ENCODE measurements at regions of chr11 and their contacts with region 1.

Region 1: DNA sequence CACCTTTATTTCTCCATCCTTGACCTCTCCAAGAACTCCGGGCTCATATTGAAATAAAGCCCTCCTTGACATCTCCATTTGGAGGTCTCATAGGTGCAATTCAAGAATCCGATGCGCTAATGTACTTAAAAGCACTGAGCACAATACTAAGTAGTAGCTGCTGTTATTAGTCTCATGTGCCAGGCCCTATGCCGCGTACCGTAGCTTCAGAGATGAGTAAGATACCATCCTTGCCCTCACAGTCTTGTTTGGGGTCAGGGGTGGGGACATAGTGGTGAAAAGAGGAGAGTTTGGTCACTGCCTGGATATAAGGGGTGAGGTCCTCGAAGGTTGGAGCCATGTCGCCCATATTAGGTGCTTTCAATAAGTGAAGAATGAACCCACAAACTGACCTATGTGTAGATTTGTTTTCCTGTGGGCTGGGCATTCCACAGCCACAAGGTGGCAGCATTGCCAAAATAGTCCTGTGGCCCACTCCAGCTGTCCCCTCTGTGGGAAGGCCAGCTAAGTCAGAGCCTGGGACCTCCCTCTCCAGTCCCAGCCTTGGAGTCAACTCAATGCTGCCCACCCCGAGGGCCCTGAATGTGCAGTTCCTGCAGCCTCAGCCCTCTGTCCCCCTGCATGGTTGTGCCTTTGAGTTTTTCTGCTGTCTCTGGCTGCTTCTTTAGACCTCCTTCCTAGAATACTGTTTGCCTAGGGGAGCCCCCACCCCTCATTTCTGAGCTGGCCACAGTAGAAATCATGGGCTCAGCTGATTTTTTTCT is 6.5 kb downstream of the DCPS start:
- DNase-seq: peak; percentile 65 to 73
- H3K4me3 ChIP-seq: no peak overlapping the region
- H3K27ac ChIP-seq: no peak overlapping the region
- H3K4me1 ChIP-seq: peaks cover 3% of the 10 kb centered on the region; the same call in 1 of the 2 replicates
- H3K27me3 ChIP-seq: no peaks in the 10 kb centered on the region
- CTCF ChIP-seq: peak; percentile 94

Region 2: DNA sequence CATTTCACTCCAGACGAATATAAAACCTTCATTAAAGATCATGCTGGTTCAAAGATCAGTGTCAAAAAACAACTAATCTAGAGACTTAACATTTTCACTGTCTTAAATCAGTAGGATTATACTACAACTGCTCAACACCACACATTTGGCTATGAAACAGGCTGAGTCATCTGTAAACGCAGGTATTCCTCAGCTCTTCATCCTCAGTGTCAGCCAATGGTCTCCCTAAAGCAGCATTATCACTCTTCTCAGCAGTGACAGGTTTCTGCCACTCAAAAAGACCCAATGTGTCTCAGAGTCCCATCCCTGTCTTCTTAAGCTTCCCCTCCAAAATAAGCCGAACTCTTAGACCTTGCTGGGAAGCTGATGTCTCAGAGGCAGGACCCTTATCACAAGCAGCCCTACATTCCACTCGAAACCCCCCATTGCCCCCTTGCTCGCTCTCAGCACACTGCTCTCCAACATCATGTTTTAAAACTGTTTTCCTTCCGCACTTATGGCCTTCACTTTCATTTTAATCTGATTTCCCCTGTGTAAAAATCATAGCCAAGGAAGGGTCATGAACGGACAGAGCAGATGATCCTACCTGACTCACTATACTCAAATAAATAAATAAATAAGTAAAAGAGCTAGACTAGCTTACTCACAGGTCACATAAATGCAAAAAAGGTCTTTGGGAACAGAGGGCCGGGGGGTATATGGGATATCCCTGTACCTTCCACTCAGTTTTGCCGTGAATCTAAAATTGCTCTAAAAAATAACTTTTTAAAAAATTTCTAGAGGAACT is 270.7 kb before region 1 on chr11:
- CTCF ChIA-PET with region 1: no interaction called
- POLR2A ChIA-PET with region 1: no interaction called
- intact Hi-C with region 1: no loop called
- DNase-seq: no peak
- H3K4me3 ChIP-seq: no peak overlapping the region
- H3K27ac ChIP-seq: no peak overlapping the region
- H3K4me1 ChIP-seq: no peaks in the 10 kb centered on the region
- H3K27me3 ChIP-seq: no peaks in the 10 kb centered on the region
- CTCF ChIP-seq: no peak

Region 3: GRCh38 chr11:126115816-126116331 is 194.5 kb before region 1 on chr11:
- CTCF ChIA-PET with region 1: no interaction called
- POLR2A ChIA-PET with region 1: interaction called, 10 read pairs
- intact Hi-C with region 1: no loop called
- DNase-seq: peak; percentile 43 to 75
- H3K4me3 ChIP-seq: no peak overlapping the region
- H3K27ac ChIP-seq: no peak overlapping the region
- H3K4me1 ChIP-seq: peaks cover 34% of the 10 kb centered on the region
- H3K27me3 ChIP-seq: no peaks in the 10 kb centered on the region
- CTCF ChIP-seq: no peak; the same call in 1 of the 2 replicates

Region 4: DNA sequence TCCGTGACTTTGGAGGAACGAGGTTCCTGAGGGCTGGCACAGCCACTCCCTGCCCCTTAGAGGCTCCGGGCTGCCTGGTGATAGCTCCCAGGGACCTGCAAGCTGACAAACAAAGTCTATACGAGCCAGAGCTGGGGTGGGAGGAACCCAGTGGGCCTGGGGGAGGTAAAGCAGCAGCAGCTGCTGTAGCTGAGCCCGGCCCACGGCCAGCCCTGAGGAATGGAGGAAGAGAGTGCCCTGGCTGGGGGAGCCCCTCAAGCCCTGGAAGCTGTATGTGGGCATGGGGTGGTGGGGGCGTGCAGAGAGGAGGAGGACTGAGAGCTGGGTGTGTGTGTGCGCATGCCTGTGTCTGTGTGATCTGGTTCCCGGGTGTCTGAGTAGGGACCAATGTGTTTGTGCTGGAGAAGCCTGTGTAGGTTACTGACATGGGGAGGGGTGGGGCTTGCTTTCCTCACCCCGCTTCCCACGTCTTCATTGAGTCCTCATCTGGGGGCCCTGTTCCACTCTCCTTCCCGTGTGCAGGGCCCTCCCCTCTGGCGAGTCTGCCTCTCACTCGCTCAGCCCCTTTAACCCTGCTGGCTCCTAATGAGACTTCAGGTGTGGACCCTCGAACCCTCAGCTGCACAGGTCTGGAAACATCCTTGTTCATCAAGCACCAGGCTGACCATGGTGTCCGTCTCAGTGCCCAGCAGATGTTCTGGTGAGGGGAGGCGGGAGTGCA is 55.8 kb after region 1 on chr11:
- CTCF ChIA-PET with region 1: no interaction called
- POLR2A ChIA-PET with region 1: no interaction called
- intact Hi-C with region 1: loop called (anchors 5 kb)
- DNase-seq: peak in 1 of 2 experiments; percentile 25
- H3K4me3 ChIP-seq: no peak overlapping the region
- H3K27ac ChIP-seq: peak overlapping the region; percentile 41
- H3K4me1 ChIP-seq: peaks cover 61% of the 10 kb centered on the region
- H3K27me3 ChIP-seq: no peaks in the 10 kb centered on the region
- CTCF ChIP-seq: no peak

Region 5: DNA sequence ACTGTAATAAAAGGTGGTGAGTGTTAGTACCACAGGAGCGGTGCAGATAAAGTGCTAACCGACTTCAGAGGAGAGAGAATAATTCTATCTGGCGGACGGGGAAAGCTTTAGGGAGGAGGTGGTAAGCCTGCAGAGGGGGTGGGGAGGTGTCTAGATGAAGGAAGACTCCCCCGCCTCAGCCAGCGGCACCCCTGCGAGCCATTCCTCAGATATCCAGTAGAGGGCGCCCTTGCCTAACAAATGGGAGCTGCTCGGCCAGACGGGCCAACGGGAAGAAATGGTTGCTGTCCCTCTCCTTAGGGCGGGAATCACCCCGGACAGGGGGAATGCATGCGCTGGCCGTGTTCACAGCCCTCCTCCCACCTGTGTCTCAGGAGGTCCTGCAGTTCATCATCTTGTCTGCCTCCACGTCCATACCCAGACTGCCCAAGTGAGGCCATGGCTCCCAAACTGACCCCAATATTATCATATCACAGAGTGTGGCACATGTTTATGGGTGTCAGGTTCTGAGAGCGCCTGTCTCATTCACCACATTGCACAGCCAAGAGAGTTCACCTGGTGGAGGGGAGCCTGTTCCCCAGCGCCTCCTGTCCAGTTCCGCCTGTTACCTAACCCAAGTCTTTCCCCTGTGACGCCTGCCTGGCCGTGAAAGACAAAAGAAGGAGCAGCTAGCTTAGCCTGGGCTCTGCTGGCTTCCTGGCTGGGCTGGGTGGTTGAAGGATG is 130.5 kb after region 1 on chr11:
- CTCF ChIA-PET with region 1: no interaction called
- POLR2A ChIA-PET with region 1: no interaction called
- intact Hi-C with region 1: loop called (anchors 1 kb)
- DNase-seq: peak; percentile 52 to 80
- H3K4me3 ChIP-seq: no peak overlapping the region
- H3K27ac ChIP-seq: no peak overlapping the region
- H3K4me1 ChIP-seq: peaks cover 3% of the 10 kb centered on the region; the same call in 1 of the 2 replicates
- H3K27me3 ChIP-seq: no peaks in the 10 kb centered on the region
- CTCF ChIP-seq: peak; percentile 98

Region 6: GRCh38 chr11:126607374-126607773 is 297.0 kb after region 1 on chr11:
- CTCF ChIA-PET with region 1: no interaction called
- POLR2A ChIA-PET with region 1: no interaction called
- intact Hi-C with region 1: loop called (anchors 2 kb)
- DNase-seq: peak in 1 of 2 experiments; percentile 55
- H3K4me3 ChIP-seq: no peak overlapping the region
- H3K27ac ChIP-seq: no peak overlapping the region
- H3K4me1 ChIP-seq: no peaks in the 10 kb centered on the region
- H3K27me3 ChIP-seq: peaks cover 97% of the 10 kb centered on the region
- CTCF ChIP-seq: peak; percentile 73

Measured in PC-9 (cell line).